Activated CD4-positive, alpha-beta T cell treated with anti-CD3 and anti-CD28 coated beads, Interleukin-2, amount 10 ng/mL, durations not matched to agents 7 days and 5 days (primary cell): ENCODE measurements at regions of chr20 and their contacts with region 1.

Region 1: GRCh38 chr20:62907384-62908317 is 18.7 kb downstream of the DIDO1 start:
- DNase-seq: peak; percentile 32
- H3K4me3 Mint-ChIP-seq: no peak overlapping the region
- H3K27ac Mint-ChIP-seq: no peak overlapping the region
- H3K4me1 Mint-ChIP-seq: peaks cover 30% of the 10 kb centered on the region
- H3K27me3 Mint-ChIP-seq: no peaks in the 10 kb centered on the region

Region 2: DNA sequence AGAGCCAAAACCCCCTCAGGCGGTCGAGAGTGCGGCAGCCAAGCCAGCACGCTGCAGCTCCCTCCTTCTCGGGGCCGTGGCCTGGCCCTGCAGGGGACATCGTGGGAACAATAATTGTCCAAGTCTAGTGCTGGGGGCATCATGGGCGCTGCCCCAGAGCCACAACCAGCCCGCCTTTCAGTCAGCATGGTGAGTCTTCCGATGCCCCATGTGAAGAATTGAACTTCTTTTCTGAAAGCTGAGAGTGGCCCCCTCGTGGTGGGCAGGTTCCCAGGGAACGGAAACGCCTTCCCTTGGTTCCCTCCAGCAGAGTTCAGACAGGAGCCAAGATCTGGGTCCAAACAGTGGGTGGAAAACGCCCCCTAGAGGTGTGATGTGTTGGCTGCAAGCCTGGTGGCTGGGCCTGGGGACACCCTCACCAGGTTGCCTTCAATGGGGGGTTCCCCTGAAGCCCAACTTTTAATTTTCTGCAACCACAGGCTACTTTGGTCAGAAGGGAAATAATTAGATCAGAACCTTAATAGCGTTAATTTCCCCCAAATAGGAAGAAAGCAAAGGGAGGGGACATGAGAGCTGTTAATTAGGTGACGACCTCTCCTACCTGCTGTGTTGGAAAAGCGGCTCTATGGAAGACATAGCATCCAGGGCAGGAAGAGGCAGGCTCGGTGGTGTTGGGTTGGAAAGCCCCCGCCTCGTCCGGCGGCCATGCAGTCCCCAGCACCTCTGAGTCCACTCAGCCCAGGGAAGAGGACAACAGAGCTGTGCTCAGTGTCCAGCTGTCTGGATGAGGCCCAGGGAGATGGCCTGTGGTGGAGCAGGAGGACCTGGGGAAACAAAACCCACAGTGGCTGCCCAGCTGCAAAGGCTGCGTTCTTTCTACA is 116.1 kb before region 1 on chr20:
- CTCF ChIA-PET with region 1: no interaction called
- POLR2A ChIA-PET with region 1: no interaction called
- DNase-seq: peak; percentile 86
- H3K4me3 Mint-ChIP-seq: no peak overlapping the region
- H3K27ac Mint-ChIP-seq: peak overlapping the region; percentile 68
- H3K4me1 Mint-ChIP-seq: peaks cover 40% of the 10 kb centered on the region
- H3K27me3 Mint-ChIP-seq: no peaks in the 10 kb centered on the region

Region 3: GRCh38 chr20:62921119-62921687 is 13.6 kb after region 1 on chr20:
- CTCF ChIA-PET with region 1: interaction called, 24 read pairs
- POLR2A ChIA-PET with region 1: no interaction called
- DNase-seq: peak; percentile 76
- H3K4me3 Mint-ChIP-seq: peak overlapping the region; percentile 67
- H3K27ac Mint-ChIP-seq: peak overlapping the region; percentile 85
- H3K4me1 Mint-ChIP-seq: peaks cover 79% of the 10 kb centered on the region
- H3K27me3 Mint-ChIP-seq: no peaks in the 10 kb centered on the region

Region 4: GRCh38 chr20:62964700-62965099 is 57.0 kb after region 1 on chr20:
- CTCF ChIA-PET with region 1: no interaction called
- POLR2A ChIA-PET with region 1: no interaction called
- DNase-seq: no peak
- H3K4me3 Mint-ChIP-seq: no peak overlapping the region
- H3K27ac Mint-ChIP-seq: no peak overlapping the region
- H3K4me1 Mint-ChIP-seq: peaks cover under 1% of the 10 kb centered on the region
- H3K27me3 Mint-ChIP-seq: no peaks in the 10 kb centered on the region